ENCODE measurements at regions of chr1 and their contacts with region 1.

Region 1: GRCh38 chr1:201184307-201185122 is 6.1 kb upstream of the IGFN1 start:
- DNase-seq: peak; percentile 66 to 88
- ATAC-seq: peak; percentile 94 to 98
- H3K4me3 ChIP-seq: no peak overlapping the region
- H3K27ac ChIP-seq: peak overlapping the region; percentile 76 to 92 (median 84)
- H3K4me1 ChIP-seq: peaks cover 38 to 40% of the 10 kb centered on the region in 2 donors
- H3K27me3 ChIP-seq: no peaks in the 10 kb centered on the region
- CTCF ChIP-seq: peak; percentile 52 to 74 (median 71)
- POLR2A ChIP-seq: peak; percentile 16 to 21

Region 2: DNA sequence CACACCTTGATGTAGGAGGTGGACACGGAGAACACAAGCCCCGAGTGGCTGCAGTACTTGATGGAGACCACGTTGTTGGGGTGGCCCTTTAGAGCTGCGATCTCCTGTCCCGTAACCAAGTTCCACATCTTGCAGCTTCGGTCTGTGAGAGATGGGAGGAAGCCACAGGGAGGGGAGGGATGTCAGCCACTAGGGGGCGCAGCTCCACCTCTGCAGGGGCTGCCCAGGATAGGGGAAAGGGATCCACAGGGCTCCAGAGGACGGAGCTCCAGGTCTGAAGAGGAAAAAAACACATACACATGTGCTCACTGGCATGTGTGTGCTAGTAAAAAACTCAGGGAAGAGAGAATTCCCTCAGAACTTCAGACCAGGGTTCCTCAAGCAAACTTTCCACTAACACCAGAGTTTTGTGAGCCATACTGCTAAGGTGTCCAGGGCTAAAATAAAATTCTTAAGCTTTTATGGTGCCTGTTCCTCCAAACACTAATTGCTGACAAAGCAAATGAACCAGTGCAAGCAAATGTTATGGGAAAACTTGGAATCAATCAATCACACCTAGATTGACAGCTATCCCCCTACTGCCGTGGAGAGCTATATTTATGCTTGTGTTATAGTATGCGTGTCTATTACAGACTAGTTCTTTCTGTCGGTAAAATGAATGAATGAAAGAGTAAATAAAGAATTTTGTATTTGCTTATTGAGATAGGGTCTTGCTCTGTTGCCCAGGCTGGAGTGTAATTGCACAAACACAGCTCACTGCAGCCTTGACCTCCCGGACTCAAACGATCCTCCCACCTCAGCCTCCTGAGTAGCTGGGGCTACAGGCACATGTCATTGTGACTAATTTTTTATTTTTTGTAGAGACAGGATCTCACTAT is 204.7 kb before region 1 on chr1:
- in situ Hi-C with region 1: no loop called
- intact Hi-C with region 1: no loop called
- DNase-seq: no peak
- ATAC-seq: no peak
- H3K4me3 ChIP-seq: no peak overlapping the region
- H3K27ac ChIP-seq: no peak overlapping the region
- H3K4me1 ChIP-seq: no peaks in the 10 kb centered on the region
- H3K27me3 ChIP-seq: no peaks in the 10 kb centered on the region
- CTCF ChIP-seq: peak in 3 of 5 experiments; percentile 18 to 49 (median 25)
- POLR2A ChIP-seq: no peak

Region 3: DNA sequence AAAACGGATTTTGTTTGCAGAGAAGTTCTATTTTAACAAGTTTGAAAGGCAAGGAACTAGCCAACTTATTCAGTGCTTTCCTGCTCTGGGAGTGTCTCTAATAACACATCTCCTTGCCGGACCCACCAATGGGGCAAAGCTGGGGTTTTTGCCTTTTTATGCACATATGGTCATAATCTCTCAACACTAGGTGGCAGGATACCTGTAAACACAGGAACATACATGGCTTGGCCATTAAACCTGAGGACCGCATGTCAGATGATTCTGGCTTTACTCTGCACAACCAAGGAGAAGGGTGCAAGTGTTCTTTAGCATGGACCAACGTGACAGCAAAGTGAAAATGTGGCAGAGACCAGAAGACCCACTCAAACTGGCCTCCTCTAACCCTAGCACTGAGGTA is 35.1 kb before region 1 on chr1:
- in situ Hi-C with region 1: no loop called
- intact Hi-C with region 1: loop called (anchors 1 kb)
- DNase-seq: no peak
- ATAC-seq: peak; percentile 45 to 49
- H3K4me3 ChIP-seq: no peak overlapping the region
- H3K27ac ChIP-seq: no peak overlapping the region
- H3K4me1 ChIP-seq: peaks cover 16 to 28% of the 10 kb centered on the region in 2 donors
- H3K27me3 ChIP-seq: no peaks in the 10 kb centered on the region
- CTCF ChIP-seq: peak; percentile 49 to 58 (median 53)
- POLR2A ChIP-seq: no peak

Region 4: GRCh38 chr1:201154389-201155165 is 29.9 kb before region 1 on chr1 and contains the start of gene TMEM9:
- in situ Hi-C with region 1: no loop called
- intact Hi-C with region 1: loop called (anchors 1 kb)
- DNase-seq: peak; percentile 93 to 96
- ATAC-seq: peak; percentile 94 to 96
- H3K4me3 ChIP-seq: peak within 1 kb of the TSS; percentile 70 to 84 (median 77)
- H3K27ac ChIP-seq: peak within 1 kb of the TSS; percentile 73 to 78 (median 76)
- H3K4me1 ChIP-seq: peaks cover 19 to 33% of the 10 kb centered on the region in 2 donors
- H3K27me3 ChIP-seq: no peaks in the 10 kb centered on the region
- CTCF ChIP-seq: no peak
- POLR2A ChIP-seq: no peak
- total RNA-seq, gene TMEM9: 11.9 to 38.8 (median 13.0) TPM